ENCODE measurements at regions of chr2 and their contacts with region 1.

Region 1: GRCh38 chr2:55761526-55761925 is 67.9 kb upstream of the PNPT1 start:
- DNase-seq: no peak
- ATAC-seq: peak; percentile 57 to 58
- H3K4me3 ChIP-seq: no peak overlapping the region
- H3K27ac ChIP-seq: peak overlapping the region; percentile 48
- H3K4me1 ChIP-seq: no peaks in the 10 kb centered on the region
- H3K27me3 ChIP-seq: no peaks in the 10 kb centered on the region
- CTCF ChIP-seq: no peak

Region 2: GRCh38 chr2:55961318-55961911 is 199.9 kb after region 1 on chr2:
- intact Hi-C with region 1: loop called (anchors 10 kb)
- DNase-seq: no peak
- ATAC-seq: peak in 1 of 2 donors; percentile 57
- H3K4me3 ChIP-seq: no peak overlapping the region
- H3K27ac ChIP-seq: no peak overlapping the region
- H3K4me1 ChIP-seq: peaks cover 12% of the 10 kb centered on the region
- H3K27me3 ChIP-seq: no peaks in the 10 kb centered on the region
- CTCF ChIP-seq: peak; percentile 55